Heart left ventricle (tissue), 16 donors: ENCODE measurements at regions of chr4 and their contacts with region 1.

Region 1: DNA sequence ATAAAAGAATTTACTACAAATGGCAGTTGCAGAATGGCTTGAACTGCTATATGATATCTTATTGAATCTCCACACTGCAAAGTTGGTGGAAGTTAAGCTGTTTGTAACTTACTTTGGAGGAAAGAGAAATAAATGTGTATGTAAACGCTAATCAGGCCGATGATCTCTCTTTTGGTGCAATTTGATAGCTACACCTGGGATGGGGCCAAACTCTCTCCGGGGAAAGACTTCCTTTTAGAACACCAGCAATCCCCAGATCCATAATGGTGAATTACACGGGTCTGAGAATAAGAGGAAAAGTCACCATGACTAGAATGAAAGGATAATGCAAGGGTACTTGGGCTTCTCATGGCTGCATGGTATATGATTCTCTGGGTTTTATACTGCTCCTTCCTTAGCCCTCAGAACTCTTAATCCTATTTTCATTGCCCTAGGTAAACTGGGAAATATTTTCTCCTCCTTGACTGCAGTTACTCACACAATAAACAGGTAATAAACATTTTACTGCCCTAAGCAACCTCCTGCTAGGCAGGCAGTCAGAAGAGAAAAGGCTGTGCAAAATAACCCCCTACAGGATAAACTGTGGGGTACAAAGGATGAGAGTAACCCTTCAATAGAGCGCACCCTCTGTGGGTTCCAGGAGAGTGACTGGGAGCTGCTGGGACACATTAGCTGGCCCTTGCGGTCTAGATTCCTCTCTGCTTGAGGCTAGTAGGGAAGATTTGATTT is 109.3 kb downstream of the MGST2 start:
- DNase-seq: no peak
- ATAC-seq: no peak
- H3K4me3 ChIP-seq: no peak overlapping the region
- H3K27ac ChIP-seq: no peak overlapping the region
- H3K4me1 ChIP-seq: peaks cover 0 to 32% (median 18%) of the 10 kb centered on the region in 12 donors
- H3K27me3 ChIP-seq: no peaks in the 10 kb centered on the region
- CTCF ChIP-seq: no peak
- POLR2A ChIP-seq: no peak

Region 2: GRCh38 chr4:139589336-139590018 is 185.4 kb before region 1 on chr4:
- intact Hi-C with region 1: no loop called
- DNase-seq: peak in 1 of 5 donors; percentile 60
- ATAC-seq: peak in 3 of 4 donors; percentile 37 to 90 (median 88)
- H3K4me3 ChIP-seq: no peak overlapping the region
- H3K27ac ChIP-seq: no peak overlapping the region
- H3K4me1 ChIP-seq: peaks cover 0 to 16% (median 0%) of the 10 kb centered on the region in 12 donors
- H3K27me3 ChIP-seq: no peaks in the 10 kb centered on the region
- CTCF ChIP-seq: no peak
- POLR2A ChIP-seq: no peak

Region 3: GRCh38 chr4:139806929-139807328 is 32.0 kb after region 1 on chr4:
- intact Hi-C with region 1: loop called in 2 of 10 experiments (anchors 2 to 5 kb)
- DNase-seq: no peak
- ATAC-seq: no peak
- H3K4me3 ChIP-seq: no peak overlapping the region
- H3K27ac ChIP-seq: no peak overlapping the region
- H3K4me1 ChIP-seq: peaks cover 0 to 20% (median 15%) of the 10 kb centered on the region in 12 donors
- H3K27me3 ChIP-seq: no peaks in the 10 kb centered on the region
- CTCF ChIP-seq: peak in 1 of 12 donors; percentile 6
- POLR2A ChIP-seq: no peak

Region 4: DNA sequence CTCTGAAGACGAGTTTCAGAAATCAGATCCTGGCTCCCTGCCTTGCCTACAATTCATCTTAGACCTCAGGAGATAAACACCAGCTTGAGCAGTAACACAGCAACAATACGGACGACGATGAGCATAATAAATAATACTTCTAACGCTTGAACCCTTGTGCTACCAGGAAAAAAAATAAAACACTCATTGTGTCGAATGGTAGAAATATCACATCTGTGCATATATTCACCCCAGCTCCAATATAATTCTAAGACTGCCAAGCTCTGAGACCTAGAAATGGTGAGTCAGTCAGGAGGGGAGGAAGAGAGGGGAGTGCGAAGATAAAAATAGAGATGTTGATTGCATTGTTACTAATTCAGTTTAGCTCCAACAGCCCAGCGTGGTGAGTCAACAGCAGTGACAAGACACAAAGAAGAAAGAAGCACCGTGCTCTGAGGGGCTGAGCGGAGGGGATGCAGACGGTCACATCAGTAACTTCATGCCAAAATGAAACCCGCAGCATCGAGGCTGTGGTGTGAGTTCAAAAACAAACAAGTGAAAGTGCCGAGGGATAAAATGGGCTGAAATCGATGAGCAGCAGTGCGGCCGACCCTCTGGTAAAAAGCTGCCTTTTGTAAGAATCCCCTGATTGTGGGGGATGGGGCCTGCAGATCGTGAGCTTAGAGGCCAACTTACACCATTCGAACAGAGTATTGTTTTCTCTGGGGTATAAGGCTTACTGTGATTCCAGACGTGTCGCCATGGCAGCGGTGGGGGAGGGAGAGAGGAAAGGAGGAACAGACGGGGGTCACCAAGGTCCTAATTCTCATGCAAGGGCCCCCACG is 41.1 kb after region 1 on chr4:
- intact Hi-C with region 1: loop called in 1 of 10 experiments (anchors 5 kb)
- DNase-seq: peak in 4 of 5 donors; percentile 53 to 70 (median 56)
- ATAC-seq: peak; percentile 79 to 93 (median 90)
- H3K4me3 ChIP-seq: peak overlapping the region in 11 of 12 donors; percentile 5 to 63 (median 50)
- H3K27ac ChIP-seq: peak overlapping the region; percentile 12 to 88 (median 78)
- H3K4me1 ChIP-seq: peaks cover 0 to 45% (median 32%) of the 10 kb centered on the region in 12 donors
- H3K27me3 ChIP-seq: no peaks in the 10 kb centered on the region
- CTCF ChIP-seq: no peak
- POLR2A ChIP-seq: peak in 1 of 2 donors; percentile 17

Region 5: GRCh38 chr4:139857021-139857420 is 82.1 kb after region 1 on chr4:
- intact Hi-C with region 1: no loop called
- DNase-seq: no peak
- ATAC-seq: peak in 2 of 4 donors; percentile 34 to 68
- H3K4me3 ChIP-seq: no peak overlapping the region
- H3K27ac ChIP-seq: no peak overlapping the region
- H3K4me1 ChIP-seq: peaks cover 0 to 9% (median 0%) of the 10 kb centered on the region in 12 donors
- H3K27me3 ChIP-seq: no peaks in the 10 kb centered on the region
- CTCF ChIP-seq: no peak
- POLR2A ChIP-seq: no peak